CD8-positive, alpha-beta memory T cell (primary cell): ENCODE measurements at regions of chr15 and their contacts with region 1.

Region 1: GRCh38 chr15:31435261-31435911 is 108.8 kb downstream of the KLF13 start:
- DNase-seq: peak; percentile 67 to 93 (median 88)
- H3K4me3 ChIP-seq: peak overlapping the region; percentile 72
- H3K4me3 Mint-ChIP-seq: peak overlapping the region; percentile 69 to 89 (median 86)
- H3K27ac ChIP-seq: peak overlapping the region; percentile 92
- H3K27ac Mint-ChIP-seq: peak overlapping the region; percentile 94 to 100 (median 98)
- H3K4me1 ChIP-seq: peaks cover 73% of the 10 kb centered on the region
- H3K4me1 Mint-ChIP-seq: peaks cover 73 to 84% (median 75%) of the 10 kb centered on the region in 3 donors
- H3K27me3 ChIP-seq: no peaks in the 10 kb centered on the region
- H3K27me3 Mint-ChIP-seq: no peaks in the 10 kb centered on the region

Region 2: DNA sequence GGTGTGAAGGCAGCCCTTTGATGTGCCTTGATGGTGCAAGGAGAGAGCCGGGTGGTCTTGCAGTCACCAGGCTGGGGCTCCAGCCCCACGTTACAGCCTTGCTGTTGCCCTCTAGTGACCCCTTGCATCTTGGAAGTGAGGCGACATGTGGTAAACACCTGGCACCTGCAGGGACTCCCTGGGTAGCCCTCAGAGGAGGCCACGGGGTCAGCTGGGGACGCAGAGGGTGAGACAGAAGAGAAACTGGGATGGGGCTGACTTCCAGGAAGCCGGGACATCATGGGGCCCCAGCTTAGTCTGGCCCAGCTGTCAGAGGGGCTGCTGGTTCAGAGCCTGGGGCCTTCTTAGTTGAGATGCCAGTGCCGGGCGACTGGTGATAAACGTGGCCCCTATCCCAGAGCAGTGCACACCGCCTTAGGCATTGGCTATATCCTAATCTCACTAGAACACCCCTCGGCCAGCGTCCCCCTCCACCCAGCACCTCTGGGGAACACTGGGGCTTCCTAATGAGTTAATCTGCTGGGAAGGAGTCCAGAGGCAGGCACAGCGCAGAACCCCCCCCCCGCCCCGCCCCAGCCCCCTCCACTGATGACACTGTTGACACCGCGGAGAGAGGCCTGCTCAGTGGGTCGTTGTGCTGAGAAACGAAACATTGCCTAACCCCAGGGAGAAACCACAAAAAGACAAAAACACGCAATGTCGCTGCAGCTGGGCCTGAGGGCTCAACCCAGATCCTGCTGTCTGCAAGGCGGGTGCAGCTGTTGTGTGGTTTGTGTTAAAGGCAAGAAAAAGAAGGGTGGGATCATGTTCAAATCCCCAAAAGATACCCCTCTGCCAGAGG is 169.3 kb before region 1 on chr15:
- CTCF ChIA-PET with region 1: interaction called, 13 read pairs
- POLR2A ChIA-PET with region 1: interaction called, 4 read pairs
- DNase-seq: peak; percentile 36 to 87 (median 80)
- H3K4me3 ChIP-seq: peak overlapping the region; percentile 46
- H3K4me3 Mint-ChIP-seq: peak overlapping the region; percentile 24 to 85 (median 82)
- H3K27ac ChIP-seq: peak overlapping the region; percentile 46
- H3K27ac Mint-ChIP-seq: peak overlapping the region; percentile 84 to 99 (median 98)
- H3K4me1 ChIP-seq: peaks cover 82% of the 10 kb centered on the region
- H3K4me1 Mint-ChIP-seq: peaks cover 63 to 92% (median 86%) of the 10 kb centered on the region in 3 donors
- H3K27me3 ChIP-seq: no peaks in the 10 kb centered on the region
- H3K27me3 Mint-ChIP-seq: no peaks in the 10 kb centered on the region

Region 3: DNA sequence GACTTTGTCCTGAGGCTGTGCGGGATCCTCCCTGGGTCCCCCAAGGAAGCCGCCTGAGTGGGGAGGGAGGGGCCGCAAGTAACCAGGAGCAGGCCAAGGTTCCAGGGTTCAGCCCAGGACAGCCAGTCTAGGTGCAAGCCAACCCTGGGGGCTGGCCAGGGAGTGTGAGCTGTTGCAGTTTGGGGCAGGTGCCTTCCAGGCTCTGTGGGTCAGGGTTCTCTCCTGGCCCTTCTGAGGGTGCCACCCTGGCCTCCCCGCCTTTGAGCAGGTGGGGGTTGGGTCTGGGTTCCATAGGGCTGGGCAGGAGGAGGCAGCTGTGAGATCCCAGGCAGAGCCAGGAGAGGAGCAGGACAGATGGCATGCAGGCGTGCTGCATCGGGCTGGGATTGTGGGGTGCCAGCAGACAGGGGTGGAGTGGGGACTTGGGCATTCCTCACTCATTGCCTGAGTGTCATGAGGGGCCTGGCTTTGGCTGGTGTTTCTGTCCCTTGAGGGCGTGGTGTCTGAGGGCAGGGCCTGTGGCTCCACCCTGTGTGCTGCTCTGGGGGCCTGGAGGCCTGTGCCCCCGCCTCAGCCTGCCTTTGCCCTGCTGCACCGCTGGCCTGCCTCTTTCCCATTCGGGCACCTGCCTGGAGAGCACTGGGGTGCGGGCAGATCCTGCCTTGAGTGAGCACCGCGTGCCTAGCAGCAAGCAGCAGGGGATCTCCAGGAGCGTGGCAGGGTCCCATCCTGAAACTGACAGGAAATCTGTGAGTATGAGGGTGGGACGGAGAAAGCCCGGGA is 90.4 kb before region 1 on chr15:
- CTCF ChIA-PET with region 1: interaction called, 15 read pairs
- POLR2A ChIA-PET with region 1: interaction called, 8 read pairs
- DNase-seq: peak in 1 of 5 donors; percentile 60
- H3K4me3 ChIP-seq: peak overlapping the region; percentile 76
- H3K4me3 Mint-ChIP-seq: peak overlapping the region; percentile 81 to 96 (median 92)
- H3K27ac ChIP-seq: peak overlapping the region; percentile 75
- H3K27ac Mint-ChIP-seq: peak overlapping the region; percentile 90 to 99 (median 96)
- H3K4me1 ChIP-seq: peaks cover 100% of the 10 kb centered on the region
- H3K4me1 Mint-ChIP-seq: peaks cover 99 to 100% (median 100%) of the 10 kb centered on the region in 3 donors
- H3K27me3 ChIP-seq: no peaks in the 10 kb centered on the region
- H3K27me3 Mint-ChIP-seq: peaks cover 0 to under 1% of the 10 kb centered on the region in 2 donors

Region 4: GRCh38 chr15:31391687-31392671 is 43.4 kb before region 1 on chr15:
- CTCF ChIA-PET with region 1: interaction called, 23 read pairs
- POLR2A ChIA-PET with region 1: interaction called, 53 read pairs
- DNase-seq: peak; percentile 78 to 91 (median 82)
- H3K4me3 ChIP-seq: peak overlapping the region; percentile 87
- H3K4me3 Mint-ChIP-seq: peak overlapping the region; percentile 87 to 98 (median 95)
- H3K27ac ChIP-seq: peak overlapping the region; percentile 73
- H3K27ac Mint-ChIP-seq: peak overlapping the region; percentile 82 to 99 (median 98)
- H3K4me1 ChIP-seq: peaks cover 33% of the 10 kb centered on the region
- H3K4me1 Mint-ChIP-seq: peaks cover 49 to 69% (median 57%) of the 10 kb centered on the region in 3 donors
- H3K27me3 ChIP-seq: no peaks in the 10 kb centered on the region
- H3K27me3 Mint-ChIP-seq: peaks cover 0 to 1% of the 10 kb centered on the region in 2 donors

Region 5: GRCh38 chr15:31472636-31473384 is 37.4 kb after region 1 on chr15:
- CTCF ChIA-PET with region 1: interaction called, 62 read pairs
- POLR2A ChIA-PET with region 1: interaction called, 8 read pairs
- DNase-seq: peak; percentile 16 to 74 (median 63)
- H3K4me3 ChIP-seq: peak overlapping the region; percentile 37
- H3K4me3 Mint-ChIP-seq: peak overlapping the region; percentile 21 to 91 (median 80)
- H3K27ac ChIP-seq: peak overlapping the region; percentile 3
- H3K27ac Mint-ChIP-seq: peak overlapping the region; percentile 78 to 97 (median 94)
- H3K4me1 ChIP-seq: peaks cover 48% of the 10 kb centered on the region
- H3K4me1 Mint-ChIP-seq: peaks cover 51 to 82% (median 52%) of the 10 kb centered on the region in 3 donors
- H3K27me3 ChIP-seq: no peaks in the 10 kb centered on the region
- H3K27me3 Mint-ChIP-seq: no peaks in the 10 kb centered on the region